Mammary epithelial cell (primary cell): ENCODE measurements at regions of chr3 and their contacts with region 1.

Region 1: DNA sequence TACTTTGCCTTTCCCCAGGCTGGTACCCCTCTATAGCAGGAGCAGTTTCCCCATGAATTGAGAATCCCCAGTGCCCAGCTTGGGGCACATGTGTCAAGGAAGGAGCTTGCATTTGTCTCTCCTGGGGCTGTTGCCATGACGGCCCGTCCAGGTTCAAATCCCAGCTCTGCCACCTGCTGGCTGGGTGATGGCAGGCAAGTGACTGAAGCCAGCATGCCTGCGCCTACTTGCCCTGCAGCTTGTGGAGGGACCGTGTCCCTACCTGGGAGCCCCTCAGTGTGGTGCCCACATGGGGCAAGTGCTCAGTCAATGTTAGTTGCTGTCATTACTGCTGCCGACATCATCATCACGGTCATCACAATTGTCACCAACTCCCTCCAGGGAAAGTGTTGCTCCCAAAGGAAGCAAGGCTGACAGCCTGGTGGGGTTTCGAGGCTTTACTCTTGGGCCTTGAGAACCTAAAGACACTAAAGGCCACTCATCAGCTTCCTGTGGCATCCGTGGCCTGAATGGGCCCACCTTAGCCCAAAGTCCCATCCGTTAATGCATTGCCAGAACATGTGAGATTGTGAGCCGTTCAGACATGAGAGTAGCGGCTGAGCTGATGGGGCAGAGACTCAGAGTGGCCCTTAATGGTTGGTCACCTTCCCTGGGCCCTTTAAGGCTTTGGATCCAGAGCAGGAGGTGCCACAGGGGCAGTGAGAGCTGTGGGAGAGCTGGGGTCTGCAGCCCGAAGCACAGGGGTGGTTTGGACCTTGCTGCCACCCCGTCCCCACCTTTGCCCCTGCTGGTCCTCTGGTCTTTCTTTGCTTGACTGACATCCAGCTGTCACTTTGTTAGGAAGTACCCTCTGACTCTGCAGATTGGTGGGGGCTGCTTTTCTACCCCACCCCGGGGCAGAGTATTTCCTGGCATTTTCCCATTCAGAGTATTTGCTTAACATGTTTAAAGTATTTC is 144.3 kb downstream of the DNAJB8 start:
- DNase-seq: peak; percentile 20
- H3K4me3 ChIP-seq: no peak overlapping the region
- H3K27ac ChIP-seq: no peak overlapping the region
- H3K4me1 ChIP-seq: no peaks in the 10 kb centered on the region
- H3K27me3 ChIP-seq: no peaks in the 10 kb centered on the region
- CTCF ChIP-seq: peak; percentile 47 to 76

Region 2: GRCh38 chr3:127544192-127544802 is 778.0 kb before region 1 on chr3:
- CTCF ChIA-PET with region 1: no interaction called
- dilution Hi-C with region 1: no loop called
- in situ Hi-C with region 1: no loop called
- intact Hi-C with region 1: no loop called
- DNase-seq: peak; percentile 43
- H3K4me3 ChIP-seq: no peak overlapping the region
- H3K27ac ChIP-seq: no peak overlapping the region
- H3K4me1 ChIP-seq: peaks cover 5% of the 10 kb centered on the region
- H3K27me3 ChIP-seq: no peaks in the 10 kb centered on the region
- CTCF ChIP-seq: peak; percentile 79 to 89

Region 3: GRCh38 chr3:128170805-128171516 is 151.4 kb before region 1 on chr3:
- CTCF ChIA-PET with region 1: no interaction called
- dilution Hi-C with region 1: no loop called
- in situ Hi-C with region 1: no loop called
- intact Hi-C with region 1: loop called (anchors 1 kb)
- DNase-seq: peak; percentile 61
- H3K4me3 ChIP-seq: no peak overlapping the region
- H3K27ac ChIP-seq: no peak overlapping the region
- H3K4me1 ChIP-seq: no peaks in the 10 kb centered on the region
- H3K27me3 ChIP-seq: no peaks in the 10 kb centered on the region
- CTCF ChIP-seq: peak; percentile 67 to 72

Region 4: DNA sequence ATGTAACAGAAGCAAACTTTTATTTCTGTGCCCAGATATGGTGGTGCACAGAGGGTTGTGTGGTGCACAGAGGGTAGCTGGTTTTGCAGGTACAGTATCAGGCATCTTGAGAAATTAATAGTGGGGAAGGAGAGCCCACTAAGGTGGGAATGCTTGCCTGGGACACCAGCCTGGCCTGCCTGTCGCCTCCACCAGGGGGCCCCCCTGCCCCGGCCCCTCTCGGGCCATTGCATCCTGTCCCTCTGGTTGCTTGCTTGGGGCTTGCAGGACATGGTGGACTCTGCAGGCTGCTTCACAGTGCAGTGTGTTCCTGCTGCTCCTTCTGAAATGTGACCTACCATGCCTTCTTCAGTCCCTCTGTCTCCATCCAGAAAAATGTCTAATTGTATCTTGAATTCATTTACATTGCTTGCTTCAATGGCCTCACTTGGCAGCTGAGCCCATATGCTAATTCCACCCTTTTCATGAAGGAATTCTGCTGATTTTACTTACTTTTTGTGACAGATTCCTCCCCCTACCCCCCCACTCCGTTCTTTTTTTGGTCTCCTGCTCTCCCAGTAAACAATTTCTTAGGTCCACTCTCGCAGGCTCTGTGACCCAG is 95.4 kb before region 1 on chr3:
- CTCF ChIA-PET with region 1: no interaction called
- dilution Hi-C with region 1: no loop called
- in situ Hi-C with region 1: no loop called
- intact Hi-C with region 1: loop called (anchors 2 kb)
- DNase-seq: peak; percentile 9
- H3K4me3 ChIP-seq: no peak overlapping the region
- H3K27ac ChIP-seq: no peak overlapping the region
- H3K4me1 ChIP-seq: no peaks in the 10 kb centered on the region
- H3K27me3 ChIP-seq: no peaks in the 10 kb centered on the region
- CTCF ChIP-seq: peak; percentile 63 to 84

Region 5: DNA sequence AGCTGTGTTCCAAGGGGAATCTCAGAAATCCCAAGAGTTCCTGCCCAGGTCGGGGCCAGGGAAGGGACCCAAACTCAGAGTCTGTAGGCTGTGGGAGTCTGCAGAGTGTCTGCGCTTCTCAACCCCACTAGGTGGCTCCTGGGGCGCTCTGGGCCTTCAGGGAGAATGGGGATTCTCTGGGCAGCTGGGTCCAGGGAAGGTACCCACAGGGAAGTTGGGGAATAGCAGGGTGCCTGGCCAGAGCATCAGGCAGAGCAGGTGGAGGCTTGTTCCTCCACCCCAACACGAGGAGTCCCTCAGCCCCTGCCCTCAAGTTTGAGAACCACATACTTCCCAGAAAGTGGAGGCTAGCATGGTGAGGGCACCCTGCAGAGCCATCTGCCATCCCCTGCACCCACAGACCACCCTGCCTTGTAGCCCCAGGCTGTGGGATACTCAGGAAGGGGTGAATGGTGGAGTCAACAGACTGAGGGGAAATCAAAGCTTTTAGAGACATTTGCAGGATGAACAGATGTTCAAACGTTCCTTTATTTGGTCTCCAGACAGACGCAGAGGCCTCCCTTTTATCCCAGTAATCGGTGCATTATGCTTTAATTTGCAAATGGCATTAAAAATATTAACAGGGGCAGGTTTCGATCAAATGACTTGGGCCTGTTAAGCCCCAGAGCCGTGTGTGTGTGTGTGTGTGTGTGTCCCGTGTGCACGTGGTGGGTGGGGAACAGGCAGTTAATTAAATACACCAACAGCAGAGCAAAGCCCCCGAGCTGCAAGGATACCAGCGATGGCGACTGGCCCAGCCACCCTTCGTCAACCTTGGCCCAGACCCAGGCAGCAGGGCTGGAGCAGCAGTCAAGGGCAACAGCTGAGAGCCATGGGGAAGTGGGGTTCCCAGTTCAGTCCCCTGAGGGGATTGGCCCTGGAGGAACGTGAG is 86.6 kb after region 1 on chr3:
- CTCF ChIA-PET with region 1: no interaction called
- dilution Hi-C with region 1: loop called (anchors 5 kb)
- in situ Hi-C with region 1: no loop called
- intact Hi-C with region 1: no loop called
- DNase-seq: no peak
- H3K4me3 ChIP-seq: no peak overlapping the region
- H3K27ac ChIP-seq: no peak overlapping the region
- H3K4me1 ChIP-seq: no peaks in the 10 kb centered on the region
- H3K27me3 ChIP-seq: no peaks in the 10 kb centered on the region
- CTCF ChIP-seq: peak in 1 of 2 donors; percentile 19